ENCODE measurements at regions of chr18 and their contacts with region 1.

Region 1: GRCh38 chr18:3281456-3282400 is 19.8 kb downstream of the MYL12B start:
- DNase-seq: no peak
- ATAC-seq: peak; percentile 74 to 93 (median 89)
- H3K4me3 ChIP-seq: no peak overlapping the region
- H3K27ac ChIP-seq: no peak overlapping the region
- H3K4me1 ChIP-seq: no peaks in the 10 kb centered on the region
- H3K27me3 ChIP-seq: no peaks in the 10 kb centered on the region
- CTCF ChIP-seq: peak; percentile 13 to 67 (median 52)

Region 2: GRCh38 chr18:3162181-3162580 is 119.5 kb before region 1 on chr18:
- intact Hi-C with region 1: no loop called
- DNase-seq: no peak
- ATAC-seq: peak in 2 of 4 donors; percentile 44 to 61
- H3K4me3 ChIP-seq: no peak overlapping the region
- H3K27ac ChIP-seq: no peak overlapping the region
- H3K4me1 ChIP-seq: no peaks in the 10 kb centered on the region
- H3K27me3 ChIP-seq: no peaks in the 10 kb centered on the region
- CTCF ChIP-seq: no peak

Region 3: DNA sequence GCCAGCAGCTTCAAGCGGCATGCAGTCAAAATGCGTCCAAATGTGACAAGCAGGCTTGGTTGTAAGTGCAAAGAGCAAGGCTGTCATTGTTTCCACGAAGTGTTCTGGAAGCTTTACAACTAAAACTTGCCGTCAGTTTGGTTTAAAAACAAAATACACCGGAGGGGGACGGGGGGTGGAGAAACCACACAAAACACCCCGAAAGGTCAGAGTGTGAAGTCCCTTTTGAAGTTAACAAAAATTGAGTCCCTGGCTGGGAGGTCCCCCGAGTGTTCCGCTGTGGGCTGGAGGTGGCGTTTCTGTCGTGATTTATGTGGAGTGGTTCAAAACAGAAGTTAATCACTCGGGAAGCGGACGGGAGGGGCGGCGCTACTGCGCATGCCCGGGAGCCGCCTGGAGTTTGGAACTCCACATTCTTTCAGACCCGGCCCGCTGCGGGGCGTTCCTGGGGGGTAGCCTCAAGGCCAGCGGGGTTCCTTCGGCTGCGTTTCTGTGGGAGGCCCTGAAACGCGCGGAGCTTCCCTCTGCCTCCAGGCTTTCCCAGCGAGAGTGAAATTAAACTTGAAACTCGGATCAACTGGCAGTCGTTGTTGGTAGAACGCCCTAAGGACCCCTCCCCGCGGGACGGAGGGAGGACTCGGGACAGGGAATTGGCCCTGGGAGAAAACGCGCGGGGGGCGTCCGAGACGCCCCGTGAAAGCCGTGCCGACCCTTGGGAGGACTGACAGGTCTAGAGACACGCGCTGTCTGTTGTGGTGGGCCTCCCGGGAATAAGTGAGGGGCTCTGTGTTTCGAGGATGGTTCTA is 169.7 kb after region 1 on chr18:
- intact Hi-C with region 1: loop called in 1 of 3 experiments (anchors 10 kb)
- DNase-seq: peak; percentile 87 to 96 (median 90)
- ATAC-seq: peak; percentile 29 to 45 (median 41)
- H3K4me3 ChIP-seq: peak overlapping the region; percentile 78 to 90 (median 80)
- H3K27ac ChIP-seq: peak overlapping the region; percentile 92 to 100 (median 98)
- H3K4me1 ChIP-seq: peaks cover 14 to 28% (median 23%) of the 10 kb centered on the region in 3 donors
- H3K27me3 ChIP-seq: no peaks in the 10 kb centered on the region
- CTCF ChIP-seq: no peak

Region 4: DNA sequence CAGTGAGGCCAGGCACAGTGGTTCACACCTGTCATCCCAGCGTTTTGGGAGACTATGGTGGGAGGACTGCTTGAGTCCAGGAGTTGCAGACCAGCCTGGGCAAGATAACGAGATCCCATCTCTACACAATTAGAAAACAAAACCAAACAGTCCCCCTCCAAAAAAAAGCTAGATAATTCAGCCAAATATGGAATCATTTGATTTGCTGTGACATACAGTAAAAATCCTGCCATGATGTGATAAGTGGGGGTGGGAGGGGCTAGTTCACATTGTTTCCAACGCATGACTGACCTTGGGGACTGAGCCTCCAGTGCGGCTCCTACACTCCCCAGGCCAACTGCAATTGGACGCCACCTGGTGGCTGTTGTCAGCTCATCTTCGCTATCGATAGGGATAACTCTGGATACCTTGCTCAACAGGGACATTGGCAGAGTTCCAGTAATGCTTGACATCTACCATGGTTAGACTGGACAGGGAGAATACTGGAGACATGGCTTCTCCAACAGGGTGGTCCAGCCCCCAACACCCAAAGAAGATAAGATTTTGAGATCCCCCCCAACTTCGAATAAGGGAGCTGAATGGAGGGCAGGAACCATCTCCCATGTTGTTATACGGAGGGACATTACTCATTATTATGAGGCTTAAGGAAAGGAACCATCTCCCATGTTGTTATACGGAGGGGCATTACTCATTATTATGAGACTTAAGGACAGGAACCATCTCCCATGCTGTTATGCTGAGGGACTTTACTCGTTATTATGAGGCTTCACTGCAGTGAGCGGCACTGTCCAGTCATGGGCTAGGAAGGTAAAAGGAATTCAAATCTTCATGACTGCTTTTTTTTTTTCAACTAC is 304.2 kb after region 1 on chr18:
- intact Hi-C with region 1: loop called in 1 of 3 experiments (anchors 10 kb)
- DNase-seq: peak; percentile 61 to 81 (median 77)
- ATAC-seq: peak; percentile 90 to 98 (median 96)
- H3K4me3 ChIP-seq: no peak overlapping the region
- H3K27ac ChIP-seq: no peak overlapping the region
- H3K4me1 ChIP-seq: no peaks in the 10 kb centered on the region
- H3K27me3 ChIP-seq: no peaks in the 10 kb centered on the region
- CTCF ChIP-seq: peak; percentile 48 to 61 (median 51)

Region 5: DNA sequence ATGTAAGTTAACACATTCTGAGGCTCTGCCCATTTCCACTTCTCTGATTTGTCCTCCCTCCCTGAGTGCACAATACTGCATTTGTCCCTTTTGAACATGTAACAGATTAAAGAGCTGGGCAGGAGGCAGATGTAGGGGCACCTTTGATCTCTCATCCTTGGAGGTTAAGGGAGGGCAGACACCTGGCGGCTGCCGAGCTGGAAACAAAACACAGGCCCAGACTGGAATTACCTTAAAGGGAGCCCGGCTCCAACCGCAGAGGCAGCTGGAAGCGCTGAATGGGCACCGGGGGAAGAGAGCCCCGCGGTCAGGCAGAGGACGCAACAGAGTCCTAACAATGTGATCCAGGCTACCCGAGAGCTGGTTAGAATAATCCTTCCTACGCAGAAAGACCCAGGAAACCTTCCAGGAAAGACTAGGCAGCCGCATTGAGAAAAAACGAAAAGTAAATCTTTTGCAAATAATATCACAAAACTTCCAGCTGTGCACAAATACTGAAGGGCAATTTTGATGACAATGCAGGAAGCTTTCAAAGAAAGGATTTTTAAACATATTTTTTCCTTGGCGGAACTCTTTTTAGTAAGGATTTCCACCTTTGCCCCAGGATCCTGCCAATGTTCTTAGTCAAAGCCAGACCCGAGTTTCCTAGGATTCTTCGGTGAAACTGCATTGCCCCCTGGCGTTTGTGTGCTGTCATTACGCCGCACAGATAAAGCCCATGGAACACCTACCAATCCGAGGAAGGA is 384.2 kb after region 1 on chr18:
- intact Hi-C with region 1: loop called (anchors 5 kb)
- DNase-seq: peak; percentile 74 to 90 (median 82)
- ATAC-seq: peak; percentile 96 to 97 (median 97)
- H3K4me3 ChIP-seq: peak overlapping the region in 2 of 4 donors; percentile 4 to 22
- H3K27ac ChIP-seq: peak overlapping the region; percentile 51 to 82 (median 64)
- H3K4me1 ChIP-seq: peaks cover 0 to 11% (median 0%) of the 10 kb centered on the region in 3 donors
- H3K27me3 ChIP-seq: no peaks in the 10 kb centered on the region
- CTCF ChIP-seq: peak; percentile 79 to 89 (median 87)

Region 6: DNA sequence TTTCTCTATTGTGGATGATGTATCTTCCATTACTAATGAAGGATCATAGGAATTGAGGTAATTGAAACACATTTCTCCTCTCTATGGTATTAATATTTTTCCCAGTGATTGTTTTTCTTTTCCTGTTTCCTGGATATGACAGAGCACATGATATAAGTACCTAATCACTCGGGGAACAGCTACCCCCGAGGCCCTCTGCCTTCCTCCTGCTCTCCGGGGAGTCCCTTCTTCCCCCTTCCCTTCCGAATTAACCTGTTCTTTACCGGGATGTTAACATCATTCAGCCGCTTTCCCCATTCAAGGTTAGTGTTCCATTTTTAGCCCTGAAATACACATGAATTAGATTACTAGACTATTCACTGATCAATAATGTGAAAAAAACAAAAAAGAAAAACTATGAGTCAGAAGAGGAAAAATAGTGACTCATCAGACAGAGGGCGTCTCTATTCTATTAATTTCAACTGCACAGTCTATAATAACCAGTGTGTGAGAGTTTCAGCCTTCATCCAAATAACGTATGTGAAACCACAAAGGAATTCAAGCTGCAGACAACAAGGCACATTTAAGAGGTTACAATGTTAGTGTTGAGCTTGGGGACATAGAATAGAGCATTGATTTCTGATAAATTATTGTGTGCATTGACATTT is 722.6 kb after region 1 on chr18:
- intact Hi-C with region 1: loop called in 1 of 3 experiments (anchors 10 kb)
- DNase-seq: no peak
- ATAC-seq: peak in 2 of 4 donors; percentile 53 to 67
- H3K4me3 ChIP-seq: no peak overlapping the region
- H3K27ac ChIP-seq: no peak overlapping the region
- H3K4me1 ChIP-seq: no peaks in the 10 kb centered on the region
- H3K27me3 ChIP-seq: no peaks in the 10 kb centered on the region
- CTCF ChIP-seq: no peak

Measured in pancreas (tissue), 10 donors.